HEK293T (cell line): ENCODE measurements at regions of chrX and their contacts with region 1.

Region 1: DNA sequence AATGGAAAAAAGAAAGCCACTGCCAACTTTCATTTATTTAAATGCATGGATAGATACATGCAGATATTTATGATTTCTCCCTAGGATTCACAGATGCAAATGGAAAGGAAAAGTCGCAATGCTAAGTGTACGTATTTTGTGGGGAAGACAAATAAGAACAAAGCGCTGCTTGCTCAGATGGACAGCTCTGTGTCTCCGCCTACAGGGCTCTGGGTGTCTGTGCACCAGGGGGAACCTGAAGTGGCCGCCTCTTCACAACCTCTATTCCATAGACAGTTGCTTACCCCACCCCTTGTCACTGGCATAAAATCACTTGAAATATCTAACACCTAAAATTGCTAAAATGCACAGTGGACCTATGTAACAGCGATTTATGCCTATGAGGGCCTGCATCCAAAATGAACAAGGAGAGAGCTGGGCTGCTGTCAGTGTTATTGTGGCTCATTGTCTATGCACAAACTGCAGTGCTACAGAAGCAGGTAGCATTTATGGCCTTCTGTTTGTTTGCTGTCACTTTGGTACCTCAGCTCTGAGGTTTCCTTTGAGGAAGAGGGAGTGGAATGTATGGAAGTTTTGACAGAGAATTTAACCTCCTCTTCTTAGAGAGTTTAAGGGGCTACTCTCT is 58.6 kb upstream of the PAGE1 start:
- DNase-seq: peak; percentile 66

Region 2: GRCh38 chrX:49725923-49726904 is 28.1 kb before region 1 on chrX:
- CTCF ChIA-PET with region 1: interaction called, 10 read pairs
- POLR2A ChIA-PET with region 1: no interaction called
- DNase-seq: no peak

Region 3: DNA sequence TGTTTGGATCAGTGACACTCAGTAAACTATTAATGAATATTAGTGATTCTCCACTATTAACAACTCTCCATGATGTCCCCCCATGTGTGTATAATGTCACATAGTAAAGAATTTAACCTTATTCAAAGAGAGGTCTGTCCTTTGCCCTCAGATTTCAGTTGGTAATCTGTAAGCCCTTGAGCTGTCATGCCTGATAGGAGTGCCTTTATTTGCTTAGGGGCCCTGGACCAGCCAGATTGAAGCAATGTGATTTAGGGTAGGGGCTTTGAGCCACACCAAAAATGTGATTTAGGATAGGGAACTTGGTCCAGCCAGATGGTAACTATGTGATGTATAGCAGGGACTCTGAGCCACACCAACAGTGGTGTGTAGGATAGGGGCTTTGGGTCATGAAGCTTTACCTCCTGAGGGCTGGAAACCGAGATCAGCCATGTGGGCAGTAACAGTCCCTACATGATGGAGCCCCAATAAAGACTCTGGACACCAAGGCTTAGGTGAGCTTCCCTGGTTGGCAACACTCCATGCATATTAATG is 30.5 kb after region 1 on chrX:
- CTCF ChIA-PET with region 1: no interaction called
- POLR2A ChIA-PET with region 1: no interaction called
- DNase-seq: no peak

Region 4: GRCh38 chrX:51643377-51643776 is 1889.0 kb after region 1 on chrX:
- CTCF ChIA-PET with region 1: interaction called, 11 read pairs
- POLR2A ChIA-PET with region 1: no interaction called
- DNase-seq: no peak